GM12878 (cell line): ENCODE measurements at regions of chr2 and their contacts with region 1.

Region 1: DNA sequence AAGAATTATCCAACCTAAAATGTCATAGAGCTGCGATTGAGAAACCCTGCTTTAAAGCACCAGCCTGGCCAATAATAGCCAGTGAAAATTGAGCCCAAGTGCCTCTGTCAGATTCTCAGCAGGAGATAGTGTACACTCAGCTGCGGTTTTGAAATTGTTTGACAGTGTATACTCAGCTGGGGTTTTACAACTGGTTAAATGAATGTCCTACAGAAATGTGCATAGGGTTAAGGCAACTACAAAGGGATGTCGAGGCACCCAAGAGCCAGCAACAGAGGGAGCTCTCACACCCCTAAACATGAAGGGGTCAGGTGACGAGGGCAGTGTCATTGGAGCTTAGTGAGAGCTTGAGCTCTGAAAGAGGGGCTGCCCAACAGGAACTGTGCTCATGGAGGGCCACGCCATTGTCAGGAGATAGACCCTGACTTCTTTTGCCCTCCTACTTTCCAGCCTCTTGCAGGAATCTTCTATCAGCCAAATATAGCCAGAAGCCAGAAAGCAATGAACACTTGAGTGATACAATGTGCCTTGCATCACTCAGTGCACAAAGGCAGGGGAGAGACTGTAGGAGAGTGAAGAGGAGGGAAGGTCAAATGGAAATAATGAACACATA is 15.1 kb downstream of the ACTG2 start:
- DNase-seq: peak; percentile 26
- ATAC-seq: peak; percentile 99
- H3K4me3 ChIP-seq: no peak overlapping the region
- H3K27ac ChIP-seq: no peak overlapping the region
- H3K4me1 ChIP-seq: no peaks in the 10 kb centered on the region
- H3K27me3 ChIP-seq: no peaks in the 10 kb centered on the region
- CTCF ChIP-seq: peak; percentile 58 to 76 (median 62)
- EP300 ChIP-seq: no peak
- POLR2A ChIP-seq: no peak
- RAD21 ChIP-seq: peak; percentile 83

Region 2: GRCh38 chr2:73896362-73897239 is 11.3 kb before region 1 on chr2:
- CTCF ChIA-PET with region 1: interaction called, 8 read pairs
- POLR2A ChIA-PET with region 1: interaction called, 8 read pairs
- RAD21 ChIA-PET with region 1: interaction called, 3 read pairs
- SMC1A ChIA-PET with region 1: interaction called, 10 read pairs
- in situ Hi-C with region 1: no loop called
- intact Hi-C with region 1: no loop called
- DNase-seq: peak; percentile 68
- ATAC-seq: peak; percentile 92
- H3K4me3 ChIP-seq: no peak overlapping the region
- H3K27ac ChIP-seq: no peak overlapping the region
- H3K4me1 ChIP-seq: peaks cover 14% of the 10 kb centered on the region
- H3K27me3 ChIP-seq: no peaks in the 10 kb centered on the region
- CTCF ChIP-seq: no peak
- EP300 ChIP-seq: peak in 1 of 2 experiments; percentile 53; a peak in 1 of 4 replicates
- POLR2A ChIP-seq: no peak
- RAD21 ChIP-seq: no peak

Region 3: GRCh38 chr2:73993376-73994145 is 85.6 kb after region 1 on chr2:
- CTCF ChIA-PET with region 1: interaction called, 78 read pairs
- POLR2A ChIA-PET with region 1: interaction called, 4 read pairs
- RAD21 ChIA-PET with region 1: interaction called, 52 read pairs
- SMC1A ChIA-PET with region 1: interaction called, 45 read pairs
- in situ Hi-C with region 1: no loop called
- intact Hi-C with region 1: no loop called
- DNase-seq: no peak
- ATAC-seq: peak; percentile 5
- H3K4me3 ChIP-seq: peak overlapping the region; percentile 21; the same call in 1 of the 2 replicates
- H3K27ac ChIP-seq: no peak overlapping the region; the same call in 1 of the 2 replicates
- H3K4me1 ChIP-seq: peaks cover 27% of the 10 kb centered on the region
- H3K27me3 ChIP-seq: no peaks in the 10 kb centered on the region
- CTCF ChIP-seq: no peak
- EP300 ChIP-seq: no peak
- POLR2A ChIP-seq: no peak
- RAD21 ChIP-seq: no peak

Region 4: DNA sequence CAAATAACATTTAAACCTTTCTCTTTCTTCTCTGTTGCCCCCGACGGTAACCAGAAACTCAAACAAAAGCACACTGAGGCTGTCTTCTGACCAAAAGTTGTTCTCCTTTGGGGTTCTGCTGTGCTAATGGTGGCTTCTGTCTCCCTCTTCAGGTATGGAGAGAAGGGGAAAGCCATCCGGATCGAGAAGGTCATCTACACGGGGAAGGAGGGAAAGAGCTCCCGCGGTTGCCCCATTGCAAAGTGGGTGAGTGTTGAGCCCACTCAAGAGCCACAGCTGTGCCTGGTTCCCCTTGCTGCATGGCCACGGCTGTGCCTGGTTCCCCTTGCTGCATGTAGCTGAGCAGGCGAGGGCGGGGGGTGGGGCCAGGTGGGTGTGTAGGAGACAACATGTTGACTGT is 172.4 kb after region 1 on chr2:
- CTCF ChIA-PET with region 1: interaction called, 29 read pairs
- POLR2A ChIA-PET with region 1: no interaction called
- RAD21 ChIA-PET with region 1: interaction called, 18 read pairs
- SMC1A ChIA-PET with region 1: interaction called, 11 read pairs
- in situ Hi-C with region 1: no loop called
- intact Hi-C with region 1: loop called (anchors 5 kb)
- DNase-seq: no peak
- ATAC-seq: peak; percentile 39
- H3K4me3 ChIP-seq: no peak overlapping the region
- H3K27ac ChIP-seq: peak overlapping the region; percentile 57
- H3K4me1 ChIP-seq: peaks cover 17% of the 10 kb centered on the region
- H3K27me3 ChIP-seq: no peaks in the 10 kb centered on the region
- CTCF ChIP-seq: peak; percentile 23 to 58 (median 28); a peak in 4 of 6 replicates
- EP300 ChIP-seq: peak in 1 of 2 experiments; percentile 7; a peak in 1 of 4 replicates
- POLR2A ChIP-seq: peak; percentile 30; the same call in 1 of the 2 replicates
- RAD21 ChIP-seq: peak; percentile 78

Region 5: GRCh38 chr2:74104839-74105238 is 196.9 kb after region 1 on chr2:
- CTCF ChIA-PET with region 1: interaction called, 20 read pairs
- POLR2A ChIA-PET with region 1: no interaction called
- RAD21 ChIA-PET with region 1: interaction called, 5 read pairs
- SMC1A ChIA-PET with region 1: interaction called, 4 read pairs
- in situ Hi-C with region 1: no loop called
- intact Hi-C with region 1: loop called (anchors 5 kb)
- DNase-seq: no peak
- ATAC-seq: no peak
- H3K4me3 ChIP-seq: no peak overlapping the region
- H3K27ac ChIP-seq: no peak overlapping the region
- H3K4me1 ChIP-seq: no peaks in the 10 kb centered on the region
- H3K27me3 ChIP-seq: no peaks in the 10 kb centered on the region
- CTCF ChIP-seq: no peak; a peak in 1 of 6 replicates
- EP300 ChIP-seq: no peak
- POLR2A ChIP-seq: no peak
- RAD21 ChIP-seq: peak; percentile 25; the same call in 1 of the 2 replicates